Esophagus squamous epithelium (tissue), 5 donors: ENCODE measurements at regions of chr5 and their contacts with region 1.

Region 1: GRCh38 chr5:157476702-157477408 is 16.8 kb downstream of the NIPAL4 start:
- DNase-seq: no peak
- H3K4me3 ChIP-seq: no peak overlapping the region
- H3K27ac ChIP-seq: peak overlapping the region in 1 of 4 donors; percentile 62
- H3K4me1 ChIP-seq: peaks cover 0 to 20% (median 0%) of the 10 kb centered on the region in 3 donors
- H3K27me3 ChIP-seq: no peaks in the 10 kb centered on the region
- CTCF ChIP-seq: peak in 5 of 6 experiments; percentile 59 to 78 (median 69)
- POLR2A ChIP-seq: no peak

Region 2: DNA sequence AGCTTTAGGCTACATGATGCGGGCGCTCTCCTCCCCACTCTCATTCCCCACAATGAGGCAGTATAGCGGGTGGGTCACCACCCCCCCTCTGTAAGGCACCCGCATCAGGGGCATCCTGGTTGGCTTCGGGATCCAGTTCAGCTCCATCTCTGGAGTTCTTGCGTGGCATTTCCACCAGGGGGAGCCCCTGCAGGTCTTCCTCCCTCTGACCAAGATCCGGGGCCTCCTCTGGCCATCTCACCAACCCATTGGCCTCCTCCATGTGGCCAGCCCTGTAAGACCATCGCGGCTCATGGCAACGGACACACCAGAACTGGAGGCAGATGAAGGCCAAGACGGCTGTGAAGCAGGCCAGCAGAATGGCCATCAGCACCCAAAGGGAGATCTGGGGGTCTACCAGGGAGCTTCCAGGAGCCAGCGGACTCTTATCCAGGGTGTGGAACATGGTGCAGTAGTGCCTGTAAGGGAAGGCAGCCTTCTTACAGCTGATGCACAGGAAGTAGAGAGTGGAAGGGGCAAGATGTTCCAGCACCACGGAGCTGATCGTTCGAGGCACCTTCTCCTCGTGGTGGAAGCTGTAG is 133.9 kb before region 1 on chr5:
- intact Hi-C with region 1: loop called (anchors 10 kb)
- DNase-seq: no peak
- H3K4me3 ChIP-seq: no peak overlapping the region
- H3K27ac ChIP-seq: no peak overlapping the region
- H3K4me1 ChIP-seq: no peaks in the 10 kb centered on the region
- H3K27me3 ChIP-seq: no peaks in the 10 kb centered on the region
- CTCF ChIP-seq: peak in 5 of 6 experiments; percentile 15 to 60 (median 44)
- POLR2A ChIP-seq: no peak

Region 3: DNA sequence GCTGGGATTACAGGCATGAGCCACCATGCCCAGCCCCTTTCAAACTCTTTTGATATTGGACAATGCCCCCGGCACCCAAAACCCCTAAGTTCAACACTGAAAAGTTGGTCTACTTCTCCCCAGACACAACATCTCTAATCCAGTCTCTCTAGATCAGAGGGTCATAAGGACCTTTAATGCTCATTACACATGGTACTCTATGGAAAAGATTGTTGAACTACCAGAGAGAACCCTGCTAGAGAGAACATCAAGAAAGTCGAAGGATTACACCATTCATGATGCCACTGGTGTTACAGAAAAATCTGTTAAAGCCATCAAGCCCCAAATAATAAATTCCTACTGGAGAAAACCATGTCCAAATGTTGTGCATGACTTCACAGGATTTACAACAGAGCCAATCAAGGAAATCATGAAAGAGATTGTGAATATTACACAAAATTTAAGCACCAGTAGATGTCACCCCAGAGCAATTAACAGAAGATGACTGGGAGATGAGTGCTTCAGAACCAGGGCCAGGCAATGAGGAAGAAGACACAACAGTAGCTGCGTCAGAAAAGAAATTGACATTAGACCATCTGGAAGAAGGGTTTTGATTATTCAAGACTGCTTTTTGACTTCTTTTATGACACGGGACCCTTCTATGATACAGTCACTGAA is 45.2 kb before region 1 on chr5:
- intact Hi-C with region 1: loop called (anchors 5 kb)
- DNase-seq: no peak
- H3K4me3 ChIP-seq: no peak overlapping the region
- H3K27ac ChIP-seq: no peak overlapping the region
- H3K4me1 ChIP-seq: no peaks in the 10 kb centered on the region
- H3K27me3 ChIP-seq: no peaks in the 10 kb centered on the region
- CTCF ChIP-seq: peak; percentile 51 to 74 (median 54)
- POLR2A ChIP-seq: no peak